Right cardiac atrium (tissue), 5 donors: ENCODE measurements at regions of chr4 and their contacts with region 1.

Region 1: GRCh38 chr4:94390804-94391410 is 48.3 kb upstream of the HPGDS start:
- DNase-seq: no peak
- ATAC-seq: no peak
- H3K4me3 ChIP-seq: no peak overlapping the region
- H3K27ac ChIP-seq: no peak overlapping the region
- H3K4me1 ChIP-seq: no peaks in the 10 kb centered on the region
- H3K27me3 ChIP-seq: no peaks in the 10 kb centered on the region

Region 2: GRCh38 chr4:94304365-94304971 is 86.4 kb before region 1 on chr4:
- intact Hi-C with region 1: loop called in 1 of 4 experiments (anchors 10 kb)
- DNase-seq: no peak
- ATAC-seq: no peak
- H3K4me3 ChIP-seq: no peak overlapping the region
- H3K27ac ChIP-seq: no peak overlapping the region
- H3K4me1 ChIP-seq: no peaks in the 10 kb centered on the region
- H3K27me3 ChIP-seq: no peaks in the 10 kb centered on the region